ENCODE measurements at regions of chr14 and their contacts with region 1.

Region 1: GRCh38 chr14:102418169-102418852 is 55.6 kb downstream of the TECPR2 start:
- DNase-seq: peak in 1 of 2 donors; percentile 68
- ATAC-seq: no peak
- H3K4me3 ChIP-seq: no peak overlapping the region
- H3K27ac ChIP-seq: no peak overlapping the region
- H3K4me1 ChIP-seq: no peaks in the 10 kb centered on the region
- H3K27me3 ChIP-seq: no peaks in the 10 kb centered on the region

Region 2: DNA sequence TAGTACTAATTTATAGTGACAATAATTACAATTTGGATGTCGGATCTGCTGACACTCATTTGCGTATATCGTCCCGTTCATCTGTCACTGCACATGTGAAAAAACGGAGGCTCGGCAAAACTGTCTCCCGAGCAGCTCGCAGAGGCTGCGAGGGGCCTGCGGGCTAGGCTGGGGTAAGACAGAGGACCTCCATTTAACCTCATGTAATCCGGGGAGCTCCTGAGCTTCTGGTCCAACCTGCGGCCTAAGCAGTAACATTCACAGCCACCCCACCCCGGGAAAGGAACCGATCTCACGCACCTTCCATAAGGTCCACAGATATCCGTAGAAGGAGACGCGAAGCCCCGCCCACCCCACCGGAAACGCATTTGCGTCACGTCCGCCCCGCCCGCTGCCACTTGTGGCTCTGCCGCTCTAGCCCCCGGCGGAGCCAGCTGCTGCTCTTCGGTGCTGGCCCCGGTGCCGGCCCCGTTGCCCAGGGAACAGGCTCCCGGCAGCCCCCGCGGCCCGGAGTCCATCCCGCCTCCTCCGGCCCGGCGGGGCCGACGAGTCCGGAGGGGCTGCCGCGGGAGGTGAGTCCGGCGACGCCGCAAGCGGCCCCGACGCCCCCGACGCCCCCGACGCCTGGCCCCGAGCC is 55.6 kb before region 1 on chr14 and contains the starts of genes CINP and TECPR2:
- intact Hi-C with region 1: no loop called
- DNase-seq: peak; percentile 98 to 100
- ATAC-seq: peak; percentile 100
- H3K4me3 ChIP-seq: peak within 1 kb of the TSS; percentile 82 to 90
- H3K27ac ChIP-seq: peak within 1 kb of the TSS; percentile 61 to 72
- H3K4me1 ChIP-seq: peaks cover 0 to 6% of the 10 kb centered on the region in 2 donors
- H3K27me3 ChIP-seq: no peaks in the 10 kb centered on the region
- total RNA-seq, gene CINP: 25.9 to 30.8 TPM
- total RNA-seq, gene TECPR2: 32.2 to 32.5 TPM

Region 3: DNA sequence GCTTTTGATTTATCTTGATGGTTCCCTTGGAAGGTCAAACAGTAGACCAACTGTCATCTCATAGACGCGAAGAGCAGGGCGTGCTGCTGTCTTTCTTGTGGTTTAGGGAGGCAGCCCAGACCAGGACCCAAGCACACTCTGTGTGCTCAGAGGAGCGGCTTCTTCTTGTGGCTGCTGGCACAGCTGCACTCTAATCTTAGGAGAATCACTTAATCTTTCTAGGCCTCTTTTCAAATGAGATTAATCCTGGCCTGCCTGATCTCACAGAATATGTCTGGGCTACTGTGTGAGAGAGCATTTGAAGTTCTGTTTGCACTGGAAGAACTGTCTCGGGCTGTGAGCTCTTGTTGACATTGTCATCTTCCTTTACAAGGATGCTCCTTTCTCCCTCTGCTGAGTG is 299.0 kb after region 1 on chr14:
- intact Hi-C with region 1: loop called in 1 of 2 experiments (anchors 2 kb)
- DNase-seq: no peak
- ATAC-seq: no peak
- H3K4me3 ChIP-seq: no peak overlapping the region
- H3K27ac ChIP-seq: no peak overlapping the region
- H3K4me1 ChIP-seq: no peaks in the 10 kb centered on the region
- H3K27me3 ChIP-seq: no peaks in the 10 kb centered on the region